SK-N-SH (cell line): ENCODE measurements at regions of chr9 and their contacts with region 1.

Region 1: GRCh38 chr9:104863180-104863883 is 64.6 kb downstream of the ABCA1 start:
- DNase-seq: peak; percentile 82
- H3K4me3 ChIP-seq: no peak overlapping the region
- H3K27ac ChIP-seq: peak overlapping the region; percentile 12 to 51; a peak in 2 of 4 replicates
- H3K4me1 ChIP-seq: peaks cover 16 to 23% of the 10 kb centered on the region in 2 experiments; a peak in 3 of 4 replicates
- H3K27me3 ChIP-seq: no peaks in the 10 kb centered on the region
- CTCF ChIP-seq: peak; percentile 95
- EP300 ChIP-seq: no peak
- RAD21 ChIP-seq: peak; percentile 92

Region 2: DNA sequence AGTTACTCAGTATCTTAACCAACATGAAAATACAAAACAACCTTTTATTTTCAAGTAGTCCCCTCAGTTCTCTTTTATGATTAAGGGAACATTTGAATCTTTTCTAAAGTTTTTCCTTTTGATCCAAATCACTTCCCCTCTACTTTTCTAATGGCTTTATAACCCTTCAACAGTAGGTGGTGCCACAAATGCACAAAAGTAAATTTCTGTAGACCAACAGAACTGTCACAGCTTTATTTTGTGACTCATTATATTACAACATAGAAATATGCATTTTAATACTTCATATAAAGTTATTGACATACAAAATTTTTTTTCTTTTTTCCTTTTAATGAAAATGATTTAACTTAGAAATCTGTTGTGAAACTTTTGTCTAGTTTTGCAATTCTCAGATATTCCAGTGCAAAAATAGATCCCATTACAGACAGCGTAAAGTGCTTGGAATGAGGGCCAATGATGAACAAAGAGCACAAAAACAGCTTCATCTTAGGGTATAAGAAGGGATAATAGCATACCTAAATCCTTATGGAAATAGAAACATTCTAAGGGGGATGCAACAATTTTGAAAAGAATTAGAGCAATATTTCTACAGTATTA is 82.4 kb before region 1 on chr9:
- CTCF ChIA-PET with region 1: interaction called, 31 read pairs
- POLR2A ChIA-PET with region 1: no interaction called
- DNase-seq: no peak
- H3K4me3 ChIP-seq: no peak overlapping the region
- H3K27ac ChIP-seq: no peak overlapping the region
- H3K4me1 ChIP-seq: no peaks in the 10 kb centered on the region; a peak in 1 of 4 replicates
- H3K27me3 ChIP-seq: no peaks in the 10 kb centered on the region
- CTCF ChIP-seq: peak; percentile 77
- EP300 ChIP-seq: no peak
- RAD21 ChIP-seq: peak; percentile 87

Region 3: DNA sequence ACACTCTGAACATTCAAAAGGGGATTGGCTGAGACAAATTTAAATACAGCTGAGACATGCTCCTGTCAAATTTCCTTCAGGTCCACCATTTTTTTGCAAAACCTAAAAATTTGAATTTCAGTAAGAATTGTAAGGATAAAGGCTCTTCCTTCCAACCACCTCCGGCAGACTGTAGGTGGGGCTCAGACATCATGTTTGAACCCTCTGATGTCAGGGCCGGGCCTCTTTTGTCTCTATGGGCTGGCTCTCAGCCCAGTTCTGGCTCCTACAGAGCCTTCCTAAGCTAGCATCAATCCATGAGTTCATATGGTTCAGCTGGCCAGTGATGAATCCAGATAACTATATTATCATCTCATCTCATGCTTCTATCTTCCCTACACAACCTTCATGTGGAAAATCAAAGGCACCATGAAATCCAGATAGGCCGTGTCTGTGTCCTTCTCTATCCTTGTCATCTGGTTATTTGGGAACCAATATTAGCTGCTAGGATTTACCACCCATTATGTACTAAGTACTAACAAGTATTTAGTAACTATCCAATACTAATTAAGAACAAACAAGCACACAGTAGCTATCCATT is 55.2 kb before region 1 on chr9:
- CTCF ChIA-PET with region 1: interaction called, 21 read pairs
- POLR2A ChIA-PET with region 1: no interaction called
- DNase-seq: peak; percentile 62
- H3K4me3 ChIP-seq: no peak overlapping the region
- H3K27ac ChIP-seq: peak overlapping the region in 1 of 2 experiments; percentile 28; a peak in 1 of 4 replicates
- H3K4me1 ChIP-seq: peaks cover 0 to 4% of the 10 kb centered on the region in 2 experiments; a peak in 2 of 4 replicates
- H3K27me3 ChIP-seq: no peaks in the 10 kb centered on the region
- CTCF ChIP-seq: peak; percentile 46
- EP300 ChIP-seq: no peak; a peak in 1 of 4 replicates
- RAD21 ChIP-seq: peak; percentile 81

Region 4: DNA sequence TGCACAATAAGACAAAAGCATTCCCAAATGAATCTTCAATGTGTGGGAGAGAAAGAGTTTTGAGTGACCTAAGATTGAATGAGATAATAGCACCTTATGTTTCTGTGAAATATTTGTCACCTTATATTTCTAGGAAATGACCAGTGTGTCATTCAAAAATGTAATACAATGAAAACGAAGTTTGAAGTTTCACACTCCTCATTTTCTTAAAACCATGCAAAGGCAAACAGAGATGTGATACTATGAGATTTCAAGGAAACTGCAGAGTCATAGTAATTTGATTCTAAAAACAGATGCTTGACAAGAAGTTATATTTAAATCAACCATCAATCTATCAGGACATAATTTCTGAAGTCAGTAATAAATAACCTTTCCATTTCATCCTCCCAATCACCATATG is 78.3 kb after region 1 on chr9:
- CTCF ChIA-PET with region 1: no interaction called
- POLR2A ChIA-PET with region 1: no interaction called
- DNase-seq: no peak
- H3K4me3 ChIP-seq: no peak overlapping the region
- H3K27ac ChIP-seq: no peak overlapping the region
- H3K4me1 ChIP-seq: no peaks in the 10 kb centered on the region
- H3K27me3 ChIP-seq: no peaks in the 10 kb centered on the region
- CTCF ChIP-seq: no peak
- EP300 ChIP-seq: no peak
- RAD21 ChIP-seq: no peak

Region 5: GRCh38 chr9:105157130-105157583 is 293.8 kb after region 1 on chr9:
- CTCF ChIA-PET with region 1: interaction called, 91 read pairs
- POLR2A ChIA-PET with region 1: no interaction called
- DNase-seq: peak; percentile 76
- H3K4me3 ChIP-seq: no peak overlapping the region
- H3K27ac ChIP-seq: peak overlapping the region in 1 of 2 experiments; percentile 24; a peak in 2 of 4 replicates
- H3K4me1 ChIP-seq: peaks cover 0 to 2% of the 10 kb centered on the region in 2 experiments; a peak in 1 of 4 replicates
- H3K27me3 ChIP-seq: no peaks in the 10 kb centered on the region
- CTCF ChIP-seq: peak; percentile 66
- EP300 ChIP-seq: no peak
- RAD21 ChIP-seq: peak; percentile 80

Region 6: GRCh38 chr9:105414947-105415661 is 551.8 kb after region 1 on chr9:
- CTCF ChIA-PET with region 1: interaction called, 53 read pairs
- POLR2A ChIA-PET with region 1: no interaction called
- DNase-seq: peak; percentile 72
- H3K4me3 ChIP-seq: peak overlapping the region in 1 of 2 experiments; percentile 45; a peak in 1 of 4 replicates
- H3K27ac ChIP-seq: no peak overlapping the region
- H3K4me1 ChIP-seq: peaks cover 0 to 2% of the 10 kb centered on the region in 2 experiments; a peak in 1 of 4 replicates
- H3K27me3 ChIP-seq: no peaks in the 10 kb centered on the region
- CTCF ChIP-seq: peak; percentile 95
- EP300 ChIP-seq: no peak
- RAD21 ChIP-seq: peak; percentile 98